ENCODE measurements at regions of chr1 and their contacts with region 1.

Region 1: GRCh38 chr1:67430352-67431155 is at the start of gene SERBP1:
- DNase-seq: peak; percentile 95 to 96
- ATAC-seq: peak; percentile 98 to 99 (median 98)
- H3K4me3 ChIP-seq: peak within 1 kb of the TSS; percentile 67 to 88 (median 85)
- H3K27ac ChIP-seq: peak within 1 kb of the TSS; percentile 60 to 94 (median 90)
- H3K4me1 ChIP-seq: peaks cover 0 to 65% (median 37%) of the 10 kb centered on the region in 9 donors
- H3K27me3 ChIP-seq: no peaks in the 10 kb centered on the region
- CTCF ChIP-seq: no peak
- total RNA-seq, gene SERBP1: 121 to 153 (median 142) TPM

Region 2: GRCh38 chr1:67390041-67390887 is 40.3 kb before region 1 on chr1:
- intact Hi-C with region 1: no loop called
- DNase-seq: no peak
- ATAC-seq: no peak
- H3K4me3 ChIP-seq: no peak overlapping the region
- H3K27ac ChIP-seq: no peak overlapping the region
- H3K4me1 ChIP-seq: peaks cover 0 to 28% (median 11%) of the 10 kb centered on the region in 9 donors
- H3K27me3 ChIP-seq: no peaks in the 10 kb centered on the region
- CTCF ChIP-seq: no peak

Region 3: GRCh38 chr1:67404212-67404620 is 26.3 kb before region 1 on chr1:
- intact Hi-C with region 1: loop called in 1 of 10 experiments (anchors 2 kb)
- DNase-seq: no peak
- ATAC-seq: no peak
- H3K4me3 ChIP-seq: no peak overlapping the region
- H3K27ac ChIP-seq: no peak overlapping the region
- H3K4me1 ChIP-seq: peaks cover 0 to 16% (median 11%) of the 10 kb centered on the region in 9 donors
- H3K27me3 ChIP-seq: no peaks in the 10 kb centered on the region
- CTCF ChIP-seq: no peak

Region 4: GRCh38 chr1:67463298-67463955 is 32.9 kb after region 1 on chr1:
- intact Hi-C with region 1: loop called in 1 of 10 experiments (anchors 2 kb)
- DNase-seq: no peak
- ATAC-seq: peak in 1 of 8 donors; percentile 47
- H3K4me3 ChIP-seq: no peak overlapping the region
- H3K27ac ChIP-seq: peak overlapping the region in 8 of 10 donors; percentile 2 to 83 (median 58)
- H3K4me1 ChIP-seq: peaks cover 5 to 54% (median 25%) of the 10 kb centered on the region in 9 donors
- H3K27me3 ChIP-seq: no peaks in the 10 kb centered on the region
- CTCF ChIP-seq: no peak

Region 5: GRCh38 chr1:67608661-67609571 is 178.4 kb after region 1 on chr1:
- intact Hi-C with region 1: no loop called
- DNase-seq: no peak
- ATAC-seq: no peak
- H3K4me3 ChIP-seq: no peak overlapping the region
- H3K27ac ChIP-seq: no peak overlapping the region
- H3K4me1 ChIP-seq: peaks cover 0 to 12% (median 8%) of the 10 kb centered on the region in 9 donors
- H3K27me3 ChIP-seq: no peaks in the 10 kb centered on the region
- CTCF ChIP-seq: no peak